Activated T-helper 1 cell treated with anti-CD3 and anti-CD28 coated beads, Interleukin-12 subunit alpha, Interleukin-12 subunit beta, Interleukin-2, Interleukin-4 antibody, amounts not matched to agents 30 ng/mL and 10 ng/mL and 1 ng/mL, durations not matched to agents 14 hours and 24 hours and 36 hours (primary cell): ENCODE measurements at regions of chr16 and their contacts with region 1.

Region 1: DNA sequence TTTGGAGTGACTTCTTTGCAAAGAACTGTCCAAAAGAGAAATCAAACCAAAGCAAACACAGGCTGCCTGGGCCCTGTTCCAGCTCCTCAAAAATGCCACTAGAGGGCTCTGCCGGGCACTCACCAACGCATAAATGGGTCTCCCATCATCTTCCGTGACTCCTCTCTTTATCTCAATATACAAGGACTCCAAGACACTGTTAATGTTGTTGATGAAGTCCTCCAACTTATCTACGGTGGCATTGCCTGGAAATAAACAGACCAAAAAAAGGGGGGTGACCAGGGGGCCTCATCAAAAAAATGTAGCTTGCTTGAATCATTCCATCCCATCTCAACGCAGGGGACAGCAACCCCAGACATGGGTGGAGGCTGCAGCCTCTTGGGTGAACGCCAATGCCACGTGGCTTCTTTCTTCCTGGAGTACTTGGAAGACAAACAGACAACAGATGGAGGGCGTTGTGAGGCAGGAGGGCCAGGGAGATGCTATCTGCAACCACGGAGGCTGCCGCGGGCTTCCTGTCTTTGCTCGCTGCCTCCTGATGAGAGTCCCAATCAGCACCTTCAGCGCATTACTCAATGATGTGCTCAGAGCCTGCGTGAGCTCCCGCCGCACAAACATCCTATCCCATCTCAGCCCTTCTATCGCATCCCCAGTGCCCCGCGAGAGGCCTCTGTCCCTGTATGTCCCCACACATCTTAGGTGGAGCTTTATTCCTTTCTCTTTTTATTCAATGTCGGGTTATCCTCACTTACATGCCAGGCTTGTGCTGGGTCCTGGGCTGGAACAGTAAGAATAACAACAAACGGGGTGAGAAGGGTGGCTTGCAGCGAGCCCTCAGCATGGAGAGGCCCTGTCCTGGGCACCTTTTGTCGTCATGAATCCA is 32.0 kb downstream of the KDM8 start:
- DNase-seq: peak; percentile 88
- H3K4me3 Mint-ChIP-seq: peak overlapping the region; percentile 82
- H3K27ac Mint-ChIP-seq: peak overlapping the region; percentile 99
- H3K4me1 Mint-ChIP-seq: peaks cover 90% of the 10 kb centered on the region
- H3K27me3 Mint-ChIP-seq: no peaks in the 10 kb centered on the region

Region 2: GRCh38 chr16:26598061-26598460 is 637.2 kb before region 1 on chr16:
- intact Hi-C with region 1: loop called (anchors 5 kb)
- DNase-seq: peak; percentile 84
- H3K4me3 Mint-ChIP-seq: peak overlapping the region; percentile 48
- H3K27ac Mint-ChIP-seq: peak overlapping the region; percentile 97
- H3K4me1 Mint-ChIP-seq: peaks cover 85% of the 10 kb centered on the region
- H3K27me3 Mint-ChIP-seq: no peaks in the 10 kb centered on the region

Region 3: DNA sequence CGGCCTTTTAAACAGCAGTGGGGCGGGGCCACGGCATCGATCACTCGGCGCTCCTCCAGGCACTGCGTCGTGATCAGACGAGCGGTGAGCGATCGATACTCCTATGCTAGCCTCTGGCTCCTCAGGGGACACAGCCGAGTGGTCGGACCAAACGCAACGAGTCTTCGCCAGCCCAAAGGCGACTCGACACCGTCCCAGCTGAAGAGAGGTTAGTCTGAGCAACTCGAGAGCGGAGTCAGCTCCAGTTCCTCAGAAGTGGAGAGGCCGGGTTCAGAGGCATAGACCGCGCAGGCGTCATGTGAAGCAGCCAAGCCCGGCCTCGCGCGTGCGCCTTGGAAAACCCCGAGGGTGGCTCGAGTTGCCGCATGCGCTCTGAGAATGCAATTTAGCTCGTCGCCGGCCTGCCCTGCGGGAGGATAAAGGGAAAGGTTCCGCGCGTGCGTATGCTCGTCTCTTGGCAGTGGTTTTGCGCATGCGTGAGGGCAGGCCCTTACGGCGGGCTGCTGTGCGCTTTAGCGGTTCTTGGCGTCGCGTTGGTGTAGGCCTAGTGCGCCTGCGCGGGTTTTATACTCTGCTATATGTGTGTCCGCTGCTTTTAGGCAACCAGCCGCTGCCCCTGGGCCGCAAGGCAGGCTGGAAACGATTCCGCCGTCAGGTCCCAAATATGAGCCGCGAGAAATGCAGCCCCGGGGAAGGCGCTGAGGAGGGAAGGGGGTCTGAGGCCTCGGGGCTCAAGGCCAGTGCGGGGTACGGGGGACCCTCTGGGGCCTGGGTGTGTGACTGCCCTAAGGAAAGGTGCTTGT is 31.7 kb before region 1 on chr16 and contains the start of gene KDM8:
- intact Hi-C with region 1: loop called (anchors 1 kb)
- DNase-seq: peak; percentile 100
- H3K4me3 Mint-ChIP-seq: peak within 1 kb of the TSS; percentile 97
- H3K27ac Mint-ChIP-seq: peak within 1 kb of the TSS; percentile 99
- H3K4me1 Mint-ChIP-seq: peaks cover 53% of the 10 kb centered on the region
- H3K27me3 Mint-ChIP-seq: no peaks in the 10 kb centered on the region
- total RNA-seq, gene KDM8: 12.5 and 14.5 TPM in 2 replicates

Region 4: DNA sequence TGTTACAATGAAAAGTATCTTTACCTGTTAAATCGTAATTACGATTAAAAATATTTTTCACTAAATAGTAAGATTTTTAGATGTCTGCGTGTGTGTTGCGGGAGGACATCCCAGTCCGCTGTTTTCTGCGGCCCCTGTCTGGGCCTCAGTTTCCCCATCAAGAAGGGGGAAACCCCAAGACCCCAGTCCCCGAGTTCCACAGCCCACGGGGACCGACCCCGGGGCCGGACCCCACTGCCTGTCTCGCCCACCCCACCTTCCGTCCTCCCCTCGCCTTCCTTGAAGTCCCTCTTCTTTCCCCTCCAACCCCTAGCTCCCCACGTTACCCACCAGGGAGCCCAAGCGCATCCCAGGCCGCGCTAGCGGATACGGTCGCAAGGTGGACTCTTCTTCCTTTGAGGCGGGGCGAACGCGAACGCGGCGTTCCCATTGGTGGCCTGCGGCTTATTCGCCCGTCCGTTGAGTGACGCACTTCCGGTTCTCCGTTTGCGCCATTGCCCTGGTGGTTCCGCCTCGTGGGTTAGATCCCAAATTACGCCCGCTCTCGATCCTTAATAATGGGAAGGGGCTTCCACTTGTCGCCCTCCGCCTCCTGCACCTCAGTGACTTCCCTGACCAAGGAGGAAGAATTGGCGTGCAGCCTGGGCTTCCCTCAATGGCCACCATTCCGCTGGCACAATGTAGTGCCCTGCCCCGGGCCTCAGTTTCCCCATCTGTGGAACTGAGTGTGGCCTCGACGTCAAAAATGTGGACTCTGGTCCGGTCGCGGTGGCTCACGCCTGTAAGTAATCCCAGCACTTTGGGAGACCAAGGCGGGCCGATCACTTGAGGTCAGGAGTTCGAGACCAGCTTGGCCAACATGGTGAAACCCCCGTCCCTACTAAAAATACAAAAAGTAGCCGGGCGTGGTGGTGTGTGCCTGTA is 33.3 kb after region 1 on chr16 and contains the start of gene NSMCE1:
- intact Hi-C with region 1: loop called (anchors 1 kb)
- DNase-seq: peak; percentile 94
- H3K4me3 Mint-ChIP-seq: peak within 1 kb of the TSS; percentile 96
- H3K27ac Mint-ChIP-seq: peak within 1 kb of the TSS; percentile 97
- H3K4me1 Mint-ChIP-seq: peaks cover 75% of the 10 kb centered on the region
- H3K27me3 Mint-ChIP-seq: no peaks in the 10 kb centered on the region
- total RNA-seq, gene NSMCE1: 128 and 134 TPM in 2 replicates

Region 5: GRCh38 chr16:27318392-27319226 is 83.3 kb after region 1 on chr16:
- intact Hi-C with region 1: loop called (anchors 1 kb)
- DNase-seq: peak; percentile 58
- H3K4me3 Mint-ChIP-seq: peak overlapping the region; percentile 94
- H3K27ac Mint-ChIP-seq: peak overlapping the region; percentile 99
- H3K4me1 Mint-ChIP-seq: peaks cover 71% of the 10 kb centered on the region
- H3K27me3 Mint-ChIP-seq: no peaks in the 10 kb centered on the region

Region 6: DNA sequence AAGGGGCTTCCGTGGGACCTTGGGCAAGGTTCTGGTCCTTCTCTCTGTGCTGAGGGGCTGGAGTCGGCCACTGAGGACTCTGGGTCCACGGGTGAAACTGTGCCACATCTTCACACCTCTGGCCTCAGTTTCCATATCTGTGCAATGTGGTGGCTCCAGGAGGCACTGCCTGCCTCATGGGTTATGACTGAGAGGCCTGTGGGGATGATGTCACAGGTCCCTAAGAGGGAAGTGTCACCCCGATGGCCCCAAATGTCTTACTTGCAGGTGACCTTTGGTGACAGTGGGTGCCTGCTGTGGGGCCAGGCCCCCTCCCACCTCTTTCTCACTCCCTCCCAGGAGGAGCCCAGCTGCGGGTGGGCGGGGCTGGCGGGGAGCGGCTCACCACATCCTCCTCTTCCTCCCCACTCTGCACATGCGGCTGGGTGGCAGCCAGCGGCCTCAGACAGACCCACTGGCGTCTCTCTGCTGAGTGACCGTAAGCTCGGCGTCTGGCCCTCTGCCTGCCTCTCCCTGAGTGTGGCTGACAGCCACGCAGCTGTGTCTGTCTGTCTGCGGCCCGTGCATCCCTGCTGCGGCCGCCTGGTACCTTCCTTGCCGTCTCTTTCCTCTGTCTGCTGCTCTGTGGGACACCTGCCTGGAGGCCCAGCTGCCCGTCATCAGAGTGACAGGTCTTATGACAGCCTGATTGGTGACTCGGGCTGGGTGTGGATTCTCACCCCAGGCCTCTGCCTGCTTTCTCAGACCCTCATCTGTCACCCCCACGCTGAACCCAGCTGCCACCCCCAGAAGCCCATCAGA is 166.7 kb after region 1 on chr16 and contains the start of gene IL21R:
- intact Hi-C with region 1: loop called (anchors 1 kb)
- DNase-seq: peak; percentile 78
- H3K4me3 Mint-ChIP-seq: peak within 1 kb of the TSS; percentile 100
- H3K27ac Mint-ChIP-seq: peak within 1 kb of the TSS; percentile 100
- H3K4me1 Mint-ChIP-seq: peaks cover 68% of the 10 kb centered on the region
- H3K27me3 Mint-ChIP-seq: no peaks in the 10 kb centered on the region
- total RNA-seq, gene IL21R: 101 and 104 TPM in 2 replicates